ENCODE measurements at regions of chr6 and their contacts with region 1.

Region 1: GRCh38 chr6:66986928-66987327 is 1279.9 kb upstream of the EYS start:
- DNase-seq: no peak
- H3K4me3 ChIP-seq: no peak overlapping the region
- H3K27ac ChIP-seq: no peak overlapping the region
- H3K4me1 ChIP-seq: no peaks in the 10 kb centered on the region
- H3K27me3 ChIP-seq: peaks cover 2% of the 10 kb centered on the region
- CTCF ChIP-seq: no peak
- EP300 ChIP-seq: no peak
- POLR2A ChIP-seq: no peak

Region 2: GRCh38 chr6:65448866-65449265 is 1538.1 kb before region 1 on chr6:
- intact Hi-C with region 1: loop called in 1 of 4 experiments (anchors 5 kb)
- DNase-seq: no peak
- H3K4me3 ChIP-seq: no peak overlapping the region
- H3K27ac ChIP-seq: no peak overlapping the region
- H3K4me1 ChIP-seq: no peaks in the 10 kb centered on the region
- H3K27me3 ChIP-seq: no peaks in the 10 kb centered on the region
- CTCF ChIP-seq: no peak
- EP300 ChIP-seq: no peak
- POLR2A ChIP-seq: no peak

Region 3: GRCh38 chr6:67030861-67031260 is 43.9 kb after region 1 on chr6:
- intact Hi-C with region 1: loop called in 1 of 4 experiments (anchors 2 kb)
- DNase-seq: no peak
- H3K4me3 ChIP-seq: no peak overlapping the region
- H3K27ac ChIP-seq: no peak overlapping the region
- H3K4me1 ChIP-seq: no peaks in the 10 kb centered on the region
- H3K27me3 ChIP-seq: no peaks in the 10 kb centered on the region
- CTCF ChIP-seq: no peak
- EP300 ChIP-seq: no peak
- POLR2A ChIP-seq: no peak

Region 4: GRCh38 chr6:67248077-67248476 is 261.1 kb after region 1 on chr6:
- intact Hi-C with region 1: no loop called
- DNase-seq: no peak
- H3K4me3 ChIP-seq: no peak overlapping the region
- H3K27ac ChIP-seq: no peak overlapping the region
- H3K4me1 ChIP-seq: no peaks in the 10 kb centered on the region
- H3K27me3 ChIP-seq: no peaks in the 10 kb centered on the region
- CTCF ChIP-seq: no peak
- EP300 ChIP-seq: no peak
- POLR2A ChIP-seq: no peak

Measured in ovary (tissue), 10 donors.